ENCODE measurements at regions of chr3 and their contacts with region 1.

Region 1: DNA sequence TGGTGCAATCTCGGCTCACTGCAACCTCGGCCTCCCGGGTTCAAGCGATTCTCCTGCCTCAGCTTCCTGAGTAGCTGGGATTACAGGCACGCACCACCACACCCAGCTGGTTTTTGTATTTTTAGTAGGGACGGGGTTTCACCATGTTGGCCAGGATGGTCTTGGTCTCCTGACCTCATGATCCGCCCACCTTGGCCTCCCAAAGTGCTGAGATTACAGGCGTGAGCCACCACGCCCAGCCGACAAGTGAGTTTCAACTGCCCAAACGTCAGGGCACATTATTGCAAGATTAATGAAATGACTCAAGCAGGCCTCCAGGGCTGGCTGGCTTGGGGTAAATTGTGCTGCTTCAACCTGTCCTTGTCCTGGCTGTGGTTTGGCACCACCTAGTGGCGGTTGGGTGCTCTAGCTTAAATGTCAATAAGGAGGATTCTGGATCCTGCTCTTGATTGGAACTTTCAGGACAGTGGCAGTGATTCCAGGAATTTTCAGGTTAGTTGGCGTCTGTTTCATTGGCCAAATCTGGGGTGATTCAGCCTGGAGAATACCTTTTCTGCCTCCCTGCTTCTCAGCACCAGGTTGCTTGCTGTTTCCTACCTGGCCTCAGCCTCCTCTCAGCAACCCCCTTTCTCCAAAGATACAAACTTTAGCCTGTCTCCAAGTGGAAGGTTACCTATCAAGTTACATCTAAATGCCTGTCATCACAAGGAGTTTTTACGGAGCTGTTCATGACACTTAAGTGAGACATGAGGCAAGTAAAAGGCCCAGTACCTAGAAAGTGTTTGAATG is 32.4 kb upstream of the SACM1L start:
- DNase-seq: peak; percentile 69 to 98 (median 92)

Region 2: GRCh38 chr3:45037734-45038455 is 618.9 kb before region 1 on chr3:
- intact Hi-C with region 1: loop called (anchors 5 kb)
- DNase-seq: peak; percentile 81 to 98 (median 92)

Region 3: DNA sequence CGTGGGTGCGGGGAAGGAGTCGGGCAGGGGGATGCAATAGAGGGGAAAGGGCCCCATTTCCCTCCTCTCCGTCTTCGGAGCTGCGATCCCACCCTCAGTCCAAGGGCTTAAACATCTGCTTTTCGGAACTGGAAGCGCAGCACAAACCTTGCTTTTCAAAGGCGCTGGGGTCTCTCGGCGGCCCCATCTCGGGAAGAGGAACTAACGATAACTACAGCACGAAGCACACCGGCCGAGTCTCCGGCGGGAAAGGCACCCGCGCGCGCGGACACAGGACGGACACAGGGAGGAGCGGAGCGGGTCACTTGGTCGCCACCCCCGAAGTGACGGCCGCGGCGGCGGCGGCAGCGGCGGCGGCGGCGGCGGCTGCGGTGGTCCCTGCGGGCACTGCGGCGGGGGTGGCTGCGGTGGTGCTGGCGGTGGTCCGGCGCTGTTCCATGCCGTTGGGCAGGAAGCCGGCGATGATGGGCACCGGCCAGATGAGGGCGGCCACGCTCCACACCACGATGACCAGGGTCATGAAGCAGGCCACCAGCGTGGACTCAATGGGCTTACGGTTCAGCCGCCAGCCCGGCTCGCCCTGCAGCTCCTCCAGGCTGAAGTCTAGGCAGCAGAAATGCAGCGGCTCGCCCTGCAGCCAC is 431.8 kb before region 1 on chr3:
- intact Hi-C with region 1: loop called (anchors 5 kb)
- DNase-seq: peak; percentile 59 to 96 (median 74)

Region 4: DNA sequence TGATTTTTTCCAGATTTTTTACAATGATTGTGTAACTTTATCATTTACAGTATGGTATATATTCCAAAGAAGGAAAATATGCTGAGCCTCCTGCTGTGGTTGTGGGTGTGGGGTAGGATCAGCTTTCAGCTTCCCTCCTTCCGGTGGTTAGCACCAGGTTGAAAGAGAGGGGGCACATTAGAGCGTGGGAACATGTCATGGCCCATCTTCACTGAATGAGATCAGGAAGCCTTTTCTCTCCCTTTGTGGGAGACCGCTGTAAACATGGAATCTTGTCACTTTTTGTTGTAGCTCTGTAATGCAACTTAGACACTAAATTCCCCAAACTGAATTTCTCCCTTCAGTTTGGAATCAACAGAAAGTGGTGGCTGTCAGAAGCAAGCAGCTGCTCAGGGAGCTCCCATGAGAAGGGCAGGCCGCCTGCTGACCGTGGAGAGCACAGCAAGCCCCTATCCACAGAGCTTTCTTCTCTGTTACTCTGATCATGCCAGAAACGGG is 148.9 kb before region 1 on chr3:
- intact Hi-C with region 1: loop called (anchors 1 kb)
- DNase-seq: peak in 3 of 10 donors; percentile 12 to 32 (median 24)

Region 5: GRCh38 chr3:45593708-45594609 is 62.8 kb before region 1 on chr3:
- intact Hi-C with region 1: loop called (anchors 5 kb)
- DNase-seq: peak in 5 of 10 donors; percentile 45 to 92 (median 82)

Region 6: DNA sequence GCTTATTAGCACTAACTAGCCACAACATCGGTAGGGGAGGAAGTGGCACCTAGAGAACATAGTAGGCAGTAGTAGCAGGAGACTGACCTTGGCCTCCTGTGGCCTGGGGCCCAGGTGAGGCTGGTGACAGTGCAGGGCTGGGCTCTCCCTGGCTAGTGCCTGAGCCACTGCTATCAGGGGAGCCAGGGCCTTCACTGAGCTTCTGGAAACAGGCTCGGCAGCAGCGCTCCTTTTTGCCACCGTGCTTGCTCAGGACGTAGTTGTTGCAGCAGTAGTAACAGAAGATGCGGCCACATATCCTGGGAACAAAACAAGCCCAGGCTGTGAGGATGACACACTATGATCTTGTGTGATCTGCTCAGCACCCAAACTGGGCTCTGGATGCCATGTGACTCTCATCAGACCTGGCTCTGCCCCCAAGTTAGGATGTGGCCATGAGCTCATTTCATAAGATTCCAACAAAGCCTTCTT is 301.6 kb after region 1 on chr3:
- intact Hi-C with region 1: no loop called
- DNase-seq: no peak

Region 7: GRCh38 chr3:46078712-46079400 is 422.1 kb after region 1 on chr3:
- intact Hi-C with region 1: no loop called
- DNase-seq: peak in 9 of 10 donors; percentile 35 to 95 (median 86)